ENCODE measurements at regions of chr22 and their contacts with region 1.

Region 1: GRCh38 chr22:45553351-45554039 is 50.8 kb downstream of the FBLN1 start:
- DNase-seq: peak; percentile 63
- ATAC-seq: peak; percentile 77
- H3K4me3 ChIP-seq: peak overlapping the region; percentile 30 to 39
- H3K27ac ChIP-seq: peak overlapping the region; percentile 48
- H3K4me1 ChIP-seq: peaks cover 14 to 33% of the 10 kb centered on the region in 2 experiments; a peak in 3 of 4 replicates
- H3K27me3 ChIP-seq: no peaks in the 10 kb centered on the region
- CTCF ChIP-seq: peak; percentile 89 to 99 (median 98)
- POLR2A ChIP-seq: no peak
- RAD21 ChIP-seq: peak; percentile 93

Region 2: DNA sequence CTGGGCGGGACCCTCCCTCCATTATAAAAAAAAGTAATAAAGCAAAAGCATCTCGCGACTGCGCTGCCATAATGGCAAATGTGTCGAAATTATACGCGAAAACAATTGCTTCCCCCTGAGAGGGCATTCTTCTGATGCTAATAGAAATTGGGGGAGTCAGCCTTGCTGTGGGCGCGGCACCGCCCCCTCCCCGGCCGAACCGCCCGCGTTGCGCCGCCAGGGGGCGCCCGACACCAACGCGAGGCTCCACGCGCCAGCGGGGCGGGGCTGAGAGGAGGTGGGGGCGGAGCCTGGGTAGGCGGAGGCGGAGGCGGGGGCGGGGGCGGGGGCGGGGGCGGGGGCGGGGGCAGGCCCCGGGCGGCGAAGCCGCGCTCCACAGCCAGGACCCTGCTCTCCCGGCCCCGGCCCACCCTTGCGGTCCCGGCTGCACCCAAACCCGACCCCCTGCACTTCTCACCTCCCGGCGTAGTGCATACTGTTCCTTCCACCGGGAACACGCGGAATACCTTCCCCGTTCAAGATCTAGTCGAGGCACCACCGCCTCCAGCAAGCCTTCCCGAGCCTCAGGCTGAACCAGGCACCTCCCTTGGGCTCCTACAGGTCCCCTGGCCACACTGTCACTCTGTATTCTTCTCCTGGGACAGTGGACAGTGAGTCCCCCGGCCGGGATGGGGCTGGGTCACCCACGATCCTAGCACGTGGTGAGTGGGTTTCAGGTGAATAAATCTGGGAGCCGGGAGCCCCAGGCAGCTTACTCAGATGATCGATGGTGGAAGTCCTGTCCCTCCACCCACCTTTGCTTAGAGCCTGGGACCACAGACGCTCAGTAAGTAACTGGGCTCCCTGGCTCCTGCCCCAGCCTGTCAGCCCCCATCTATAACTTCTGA is 284.3 kb before region 1 on chr22:
- CTCF ChIA-PET with region 1: no interaction called
- POLR2A ChIA-PET with region 1: no interaction called
- RAD21 ChIA-PET with region 1: no interaction called
- intact Hi-C with region 1: loop called (anchors 1 kb)
- DNase-seq: no peak
- ATAC-seq: peak; percentile 87
- H3K4me3 ChIP-seq: peak overlapping the region; percentile 55 to 72
- H3K27ac ChIP-seq: no peak overlapping the region; the same call in 1 of the 2 replicates
- H3K4me1 ChIP-seq: peaks cover 6 to 13% of the 10 kb centered on the region in 2 experiments
- H3K27me3 ChIP-seq: no peaks in the 10 kb centered on the region
- CTCF ChIP-seq: peak; percentile 78 to 82 (median 79); a peak in 5 of 6 replicates
- POLR2A ChIP-seq: no peak
- RAD21 ChIP-seq: peak; percentile 89

Region 3: GRCh38 chr22:45441138-45441537 is 112.4 kb before region 1 on chr22:
- CTCF ChIA-PET with region 1: interaction called, 22 read pairs
- POLR2A ChIA-PET with region 1: interaction called, 5 read pairs
- RAD21 ChIA-PET with region 1: interaction called in 1 of 2 experiments, 3 read pairs
- intact Hi-C with region 1: loop called (anchors 1 kb)
- DNase-seq: peak; percentile 42
- ATAC-seq: peak; percentile 99
- H3K4me3 ChIP-seq: no peak overlapping the region
- H3K27ac ChIP-seq: no peak overlapping the region
- H3K4me1 ChIP-seq: peaks cover 0 to 2% of the 10 kb centered on the region in 2 experiments; a peak in 1 of 4 replicates
- H3K27me3 ChIP-seq: no peaks in the 10 kb centered on the region
- CTCF ChIP-seq: peak; percentile 73 to 75 (median 73)
- POLR2A ChIP-seq: no peak
- RAD21 ChIP-seq: peak; percentile 75

Measured in HCT116 (cell line).